Ascending aorta (tissue), 2 donors: ENCODE measurements at regions of chr2 and their contacts with region 1.

Region 1: GRCh38 chr2:113756355-113757137 is at the start of gene SLC35F5:
- DNase-seq: peak; percentile 67 to 96
- H3K4me3 ChIP-seq: peak within 1 kb of the TSS; percentile 86 to 96
- H3K27ac ChIP-seq: peak within 1 kb of the TSS; percentile 92 to 97
- H3K4me1 ChIP-seq: peaks cover 4 to 12% of the 10 kb centered on the region in 2 donors
- H3K27me3 ChIP-seq: no peaks in the 10 kb centered on the region
- CTCF ChIP-seq: no peak
- total RNA-seq, gene SLC35F5: 55.7 TPM

Region 2: GRCh38 chr2:113357071-113357470 is 399.5 kb before region 1 on chr2:
- intact Hi-C with region 1: no loop called
- DNase-seq: no peak
- H3K4me3 ChIP-seq: no peak overlapping the region
- H3K27ac ChIP-seq: no peak overlapping the region
- H3K4me1 ChIP-seq: no peaks in the 10 kb centered on the region
- H3K27me3 ChIP-seq: no peaks in the 10 kb centered on the region
- CTCF ChIP-seq: no peak

Region 3: DNA sequence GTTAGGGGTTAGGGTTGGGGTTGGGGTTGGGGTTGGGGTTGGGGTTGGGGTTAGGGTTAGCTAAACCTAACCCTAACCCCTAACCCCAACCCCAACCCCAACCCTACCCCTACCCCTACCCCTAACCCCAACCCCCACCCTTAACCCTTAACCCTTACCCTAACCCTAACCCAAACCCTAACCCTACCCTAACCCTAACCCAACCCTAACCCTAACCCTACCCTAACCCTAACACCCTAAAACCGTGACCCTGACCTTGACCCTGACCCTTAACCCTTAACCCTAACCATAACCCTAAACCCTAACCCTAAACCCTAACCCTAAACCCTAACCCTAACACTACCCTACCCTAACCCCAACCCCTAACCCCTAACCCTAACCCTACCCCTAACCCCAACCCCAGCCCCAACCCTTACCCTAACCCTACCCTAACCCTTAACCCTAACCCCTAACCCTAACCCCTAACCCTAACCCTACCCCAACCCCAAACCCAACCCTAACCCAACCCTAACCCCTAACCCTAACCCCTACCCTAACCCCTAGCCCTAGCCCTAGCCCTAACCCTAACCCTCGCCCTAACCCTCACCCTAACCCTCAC is 153.6 kb before region 1 on chr2:
- intact Hi-C with region 1: no loop called
- DNase-seq: no peak
- H3K4me3 ChIP-seq: peak overlapping the region; percentile 75 to 78
- H3K27ac ChIP-seq: peak overlapping the region; percentile 79 to 84
- H3K4me1 ChIP-seq: no peaks in the 10 kb centered on the region
- H3K27me3 ChIP-seq: no peaks in the 10 kb centered on the region
- CTCF ChIP-seq: no peak

Region 4: DNA sequence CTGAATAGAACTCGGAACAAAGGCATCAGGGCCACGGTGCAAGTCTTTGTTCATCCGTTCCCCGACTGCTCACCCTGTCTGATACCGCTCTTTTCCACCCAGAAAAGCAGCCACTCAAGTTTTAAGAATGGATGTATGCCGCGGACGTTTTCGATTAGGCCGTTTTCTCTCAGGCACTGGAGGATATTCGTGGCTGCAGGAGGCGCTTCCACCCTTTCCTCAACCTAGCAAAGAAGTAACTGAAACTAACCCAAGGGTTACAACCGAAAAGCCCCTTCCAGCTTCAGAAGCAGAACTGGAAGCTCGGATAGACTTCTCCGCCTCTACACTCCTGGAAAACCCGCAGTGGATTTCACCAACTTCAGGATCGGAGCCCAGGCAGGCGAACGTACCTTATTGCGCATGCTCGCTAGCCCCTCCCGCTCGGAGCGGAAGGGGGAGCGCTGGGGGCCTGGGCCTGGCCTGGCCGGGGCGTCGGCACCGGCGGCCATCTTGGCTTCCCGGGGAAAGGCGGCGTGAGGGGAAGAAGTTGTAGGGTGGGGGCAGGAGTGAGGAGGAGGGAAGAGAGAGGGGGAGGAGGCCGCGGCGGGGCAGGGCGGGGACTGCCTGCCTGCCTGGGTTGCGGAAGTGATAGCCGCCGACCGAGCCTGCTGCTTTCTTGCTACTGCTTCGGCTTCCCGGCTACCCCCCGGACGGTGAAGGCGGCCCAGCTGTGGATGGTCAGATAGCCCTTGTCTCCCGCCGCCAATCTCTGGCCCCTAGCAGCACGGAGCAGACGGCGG is 133.1 kb after region 1 on chr2 and contains the start of gene ACTR3:
- intact Hi-C with region 1: loop called (anchors 1 kb)
- DNase-seq: peak; percentile 91 to 99
- H3K4me3 ChIP-seq: peak within 1 kb of the TSS; percentile 94 to 95
- H3K27ac ChIP-seq: peak within 1 kb of the TSS; percentile 99 to 100
- H3K4me1 ChIP-seq: peaks cover 0 to 27% of the 10 kb centered on the region in 2 donors
- H3K27me3 ChIP-seq: no peaks in the 10 kb centered on the region
- CTCF ChIP-seq: peak in 1 of 3 experiments; percentile 2
- total RNA-seq, gene ACTR3: 45.4 TPM

Region 5: GRCh38 chr2:113922784-113923183 is 166.2 kb after region 1 on chr2:
- intact Hi-C with region 1: loop called (anchors 10 kb)
- DNase-seq: no peak
- H3K4me3 ChIP-seq: no peak overlapping the region
- H3K27ac ChIP-seq: no peak overlapping the region
- H3K4me1 ChIP-seq: peaks cover 0 to 4% of the 10 kb centered on the region in 2 donors
- H3K27me3 ChIP-seq: no peaks in the 10 kb centered on the region
- CTCF ChIP-seq: no peak